ENCODE measurements at regions of chr13 and their contacts with region 1.

Region 1: DNA sequence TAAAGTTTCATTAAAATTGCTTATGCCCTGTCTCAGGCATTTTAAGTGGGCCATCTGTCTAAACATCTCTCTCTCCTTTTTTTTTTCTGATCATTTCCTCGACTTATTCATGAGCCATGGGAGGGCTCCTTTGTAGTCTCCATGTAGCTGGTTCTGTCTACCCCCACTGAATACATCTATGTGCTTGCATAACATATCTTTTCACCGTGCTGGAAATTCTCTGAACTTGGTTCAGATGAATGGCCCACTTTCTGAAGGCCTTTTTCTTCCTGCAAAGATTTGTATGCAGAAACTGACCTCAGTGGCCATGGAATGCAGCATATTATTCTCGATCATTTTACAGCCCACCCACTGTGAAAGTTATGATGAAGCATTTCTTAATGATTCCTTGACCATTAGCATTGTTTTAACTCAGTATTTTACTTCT is 225.3 kb downstream of the GGACT start:
- DNase-seq: no peak
- H3K4me3 ChIP-seq: no peak overlapping the region
- H3K27ac ChIP-seq: no peak overlapping the region
- H3K4me1 ChIP-seq: no peaks in the 10 kb centered on the region
- H3K27me3 ChIP-seq: no peaks in the 10 kb centered on the region
- CTCF ChIP-seq: no peak
- POLR2A ChIP-seq: no peak

Region 2: DNA sequence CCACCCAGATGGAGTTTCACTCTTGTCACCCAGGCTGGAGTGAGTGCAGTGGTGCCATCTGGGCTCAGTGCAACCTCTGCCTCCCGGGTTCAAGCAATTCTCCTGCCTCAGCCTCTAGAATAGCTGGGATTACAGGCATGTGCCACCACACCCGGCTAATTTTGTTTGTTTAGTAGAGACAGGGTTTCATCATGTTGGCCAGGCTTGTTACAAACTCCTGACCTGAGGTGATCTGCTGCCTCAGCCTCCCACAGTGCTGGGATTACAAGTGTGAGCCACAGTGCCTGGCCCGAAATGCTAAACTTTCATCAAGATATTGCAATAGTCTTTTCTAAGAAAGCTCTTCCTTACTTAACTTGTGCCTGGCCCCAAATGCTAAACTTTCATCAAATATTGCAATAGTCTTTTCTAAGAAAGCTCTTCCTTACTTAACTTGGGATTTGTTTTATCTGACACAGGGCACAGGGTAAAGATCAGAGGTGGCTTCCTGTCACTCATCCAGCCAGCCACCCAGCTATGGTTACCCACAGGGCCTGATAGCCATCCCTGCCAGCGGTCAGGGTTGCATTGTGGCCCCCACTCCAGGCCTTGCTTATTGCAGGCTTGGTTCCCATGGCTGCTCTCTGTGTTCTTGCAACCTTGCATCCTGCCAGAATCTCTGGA is 663.6 kb after region 1 on chr13:
- intact Hi-C with region 1: loop called (anchors 5 kb)
- DNase-seq: no peak
- H3K4me3 ChIP-seq: no peak overlapping the region
- H3K27ac ChIP-seq: no peak overlapping the region
- H3K4me1 ChIP-seq: no peaks in the 10 kb centered on the region
- H3K27me3 ChIP-seq: no peaks in the 10 kb centered on the region
- CTCF ChIP-seq: no peak
- POLR2A ChIP-seq: no peak

Measured in breast epithelium (tissue), 4 donors.